ENCODE measurements at regions of chr11 and their contacts with region 1.

Region 1: DNA sequence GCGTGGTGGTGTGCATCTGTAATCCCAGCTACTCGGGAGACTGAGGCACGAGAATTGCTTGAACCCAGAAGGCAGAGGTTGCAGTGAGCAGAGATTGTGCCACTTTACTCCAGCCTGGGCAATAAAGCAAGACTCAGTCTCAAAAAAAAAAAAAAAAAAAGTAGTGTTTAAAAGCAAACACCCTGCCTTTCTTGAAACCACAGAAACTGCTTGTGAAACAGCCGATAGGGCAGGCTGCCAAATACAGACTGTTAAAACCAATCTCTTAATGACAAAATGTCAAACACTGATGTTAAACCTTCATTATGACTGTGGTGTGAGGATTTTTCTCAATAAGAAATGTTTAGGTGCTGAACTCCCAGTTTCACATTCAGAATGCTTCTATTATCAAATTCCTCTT is 27.3 kb downstream of the MARK2 start:
- DNase-seq: peak; percentile 46 to 88 (median 70)
- ATAC-seq: peak; percentile 65
- H3K4me3 ChIP-seq: no peak overlapping the region
- H3K4me3 Mint-ChIP-seq: peak overlapping the region; percentile 72
- H3K27ac ChIP-seq: peak overlapping the region; percentile 10 to 28
- H3K27ac Mint-ChIP-seq: peak overlapping the region; percentile 67
- H3K4me1 ChIP-seq: peaks cover 87% of the 10 kb centered on the region
- H3K4me1 Mint-ChIP-seq: peaks cover 81% of the 10 kb centered on the region
- H3K27me3 ChIP-seq: no peaks in the 10 kb centered on the region
- H3K27me3 Mint-ChIP-seq: no peaks in the 10 kb centered on the region
- CTCF ChIP-seq: no peak

Region 2: GRCh38 chr11:63845303-63845702 is 20.9 kb before region 1 on chr11:
- CTCF ChIA-PET with region 1: no interaction called
- POLR2A ChIA-PET with region 1: interaction called, 15 read pairs
- intact Hi-C with region 1: loop called in 1 of 2 experiments (anchors 1 kb)
- DNase-seq: peak in 2 of 14 experiments; percentile 55 to 63
- ATAC-seq: no peak
- H3K4me3 ChIP-seq: no peak overlapping the region
- H3K4me3 Mint-ChIP-seq: no peak overlapping the region
- H3K27ac ChIP-seq: no peak overlapping the region
- H3K27ac Mint-ChIP-seq: peak overlapping the region; percentile 47
- H3K4me1 ChIP-seq: peaks cover 79% of the 10 kb centered on the region
- H3K4me1 Mint-ChIP-seq: peaks cover 86% of the 10 kb centered on the region
- H3K27me3 ChIP-seq: no peaks in the 10 kb centered on the region
- H3K27me3 Mint-ChIP-seq: no peaks in the 10 kb centered on the region
- CTCF ChIP-seq: no peak

Region 3: GRCh38 chr11:63906585-63906984 is 40.4 kb after region 1 on chr11:
- CTCF ChIA-PET with region 1: no interaction called
- POLR2A ChIA-PET with region 1: interaction called, 3 read pairs
- intact Hi-C with region 1: loop called (anchors 5 kb)
- DNase-seq: peak; percentile 47 to 79 (median 60)
- ATAC-seq: peak; percentile 82
- H3K4me3 ChIP-seq: no peak overlapping the region
- H3K4me3 Mint-ChIP-seq: no peak overlapping the region
- H3K27ac ChIP-seq: no peak overlapping the region
- H3K27ac Mint-ChIP-seq: peak overlapping the region; percentile 36
- H3K4me1 ChIP-seq: no peaks in the 10 kb centered on the region
- H3K4me1 Mint-ChIP-seq: no peaks in the 10 kb centered on the region
- H3K27me3 ChIP-seq: no peaks in the 10 kb centered on the region
- H3K27me3 Mint-ChIP-seq: no peaks in the 10 kb centered on the region
- CTCF ChIP-seq: peak; percentile 59